ENCODE measurements at regions of chr2 and their contacts with region 1.

Region 1: DNA sequence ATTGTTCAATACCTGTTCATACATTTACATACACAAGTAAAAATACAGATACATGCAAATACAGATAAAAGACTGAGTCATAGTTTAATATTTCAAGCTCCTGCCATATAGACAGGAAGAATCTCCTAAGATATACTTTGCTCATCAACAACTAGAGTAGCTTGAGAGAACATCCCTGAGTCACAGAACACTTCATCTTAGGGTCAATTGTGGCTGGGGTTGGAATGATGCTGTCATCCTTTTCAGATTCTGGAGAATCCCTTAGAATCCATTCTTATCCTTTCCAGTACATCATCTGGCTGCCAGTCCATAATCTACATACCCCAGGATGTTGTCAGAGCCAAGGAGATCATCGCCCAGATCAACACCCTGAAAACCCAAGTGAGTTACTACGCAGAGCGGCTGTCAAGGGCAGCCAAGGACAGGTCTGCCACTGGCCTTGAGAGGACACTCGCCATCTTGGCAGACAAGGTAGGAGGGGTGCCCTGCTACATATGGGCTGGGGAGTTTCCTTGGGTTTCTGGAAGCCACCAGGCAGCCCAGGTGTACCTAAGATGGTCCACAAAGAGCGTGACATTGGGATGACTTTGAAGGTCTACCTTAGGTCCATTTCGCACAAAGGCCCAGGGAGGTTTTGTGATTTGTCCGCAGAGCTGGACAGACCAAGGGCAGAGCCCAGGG is 55.7 kb downstream of the COA5 start:
- DNase-seq: no peak
- ATAC-seq: no peak

Region 2: GRCh38 chr2:97654791-97655190 is 897.8 kb before region 1 on chr2:
- intact Hi-C with region 1: loop called (anchors 5 kb)
- DNase-seq: no peak
- ATAC-seq: no peak

Region 3: GRCh38 chr2:98583816-98584618 is 31.4 kb after region 1 on chr2:
- intact Hi-C with region 1: no loop called
- DNase-seq: no peak
- ATAC-seq: no peak

Region 4: DNA sequence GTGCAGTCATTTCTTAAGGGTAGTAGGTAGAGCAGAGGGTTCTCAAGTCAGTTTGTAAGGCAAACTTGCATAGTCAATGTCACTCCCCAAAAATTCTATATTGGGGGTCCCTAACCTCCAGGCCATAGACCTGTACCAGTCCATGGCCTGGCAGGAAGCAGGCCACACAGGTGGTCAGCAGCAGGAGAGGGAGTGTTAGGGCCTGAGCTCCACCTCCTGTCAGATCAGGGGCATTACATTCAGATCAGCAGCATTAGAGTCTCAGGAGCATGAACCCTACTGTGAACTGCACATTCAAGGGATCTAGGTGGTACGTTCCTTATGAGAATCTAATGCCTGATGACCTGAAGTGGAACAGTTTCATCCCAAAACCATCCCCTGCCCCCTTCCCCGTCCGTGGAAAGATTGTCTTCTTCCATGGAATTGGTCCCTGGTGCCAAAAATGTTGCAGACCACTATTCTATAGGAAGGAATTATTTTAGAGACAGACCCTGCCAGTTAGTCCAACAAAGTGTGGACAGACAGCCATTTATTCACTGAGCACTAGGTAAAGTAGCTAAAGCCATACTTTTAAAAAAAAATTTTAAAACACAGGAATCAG is 49.0 kb after region 1 on chr2:
- intact Hi-C with region 1: no loop called
- DNase-seq: no peak
- ATAC-seq: peak; percentile 59